Mammary epithelial cell (primary cell): ENCODE measurements at regions of chr3 and their contacts with region 1.

Region 1: GRCh38 chr3:9862391-9863057 is 17.5 kb downstream of the CIDEC start:
- DNase-seq: no peak
- H3K4me3 ChIP-seq: no peak overlapping the region
- H3K27ac ChIP-seq: no peak overlapping the region
- H3K4me1 ChIP-seq: peaks cover 23% of the 10 kb centered on the region
- H3K27me3 ChIP-seq: no peaks in the 10 kb centered on the region
- CTCF ChIP-seq: no peak

Region 2: DNA sequence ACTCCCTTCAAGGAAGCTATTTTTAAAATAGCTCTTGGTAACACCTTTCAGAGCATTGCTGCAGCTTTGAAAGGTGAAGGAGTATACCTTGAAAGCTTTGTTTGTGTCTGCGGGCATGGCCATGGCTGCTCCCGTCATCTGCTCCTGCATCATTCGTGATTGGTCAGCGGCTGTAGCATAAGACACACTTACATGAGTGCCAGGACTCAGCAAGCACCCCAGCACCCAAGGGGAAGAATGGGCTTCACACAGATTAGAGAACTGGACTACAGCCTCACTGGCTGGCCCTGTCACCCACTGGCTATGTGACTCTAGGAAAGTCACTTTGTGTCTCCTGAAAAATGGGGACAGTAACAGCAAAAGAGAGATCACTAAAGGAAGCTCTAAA is 107.1 kb after region 1 on chr3:
- CTCF ChIA-PET with region 1: no interaction called
- dilution Hi-C with region 1: loop called (anchors 5 kb)
- in situ Hi-C with region 1: no loop called
- intact Hi-C with region 1: no loop called
- DNase-seq: no peak
- H3K4me3 ChIP-seq: no peak overlapping the region
- H3K27ac ChIP-seq: no peak overlapping the region
- H3K4me1 ChIP-seq: peaks cover 6% of the 10 kb centered on the region
- H3K27me3 ChIP-seq: no peaks in the 10 kb centered on the region
- CTCF ChIP-seq: no peak